Mammary epithelial cell (primary cell): ENCODE measurements at regions of chr11 and their contacts with region 1.

Region 1: GRCh38 chr11:4826425-4826824 is 5.3 kb downstream of the OR51F2 start:
- DNase-seq: no peak
- H3K4me3 ChIP-seq: no peak overlapping the region
- H3K27ac ChIP-seq: no peak overlapping the region
- H3K4me1 ChIP-seq: no peaks in the 10 kb centered on the region
- H3K27me3 ChIP-seq: no peaks in the 10 kb centered on the region
- CTCF ChIP-seq: peak in 1 of 2 donors; percentile 60

Region 2: DNA sequence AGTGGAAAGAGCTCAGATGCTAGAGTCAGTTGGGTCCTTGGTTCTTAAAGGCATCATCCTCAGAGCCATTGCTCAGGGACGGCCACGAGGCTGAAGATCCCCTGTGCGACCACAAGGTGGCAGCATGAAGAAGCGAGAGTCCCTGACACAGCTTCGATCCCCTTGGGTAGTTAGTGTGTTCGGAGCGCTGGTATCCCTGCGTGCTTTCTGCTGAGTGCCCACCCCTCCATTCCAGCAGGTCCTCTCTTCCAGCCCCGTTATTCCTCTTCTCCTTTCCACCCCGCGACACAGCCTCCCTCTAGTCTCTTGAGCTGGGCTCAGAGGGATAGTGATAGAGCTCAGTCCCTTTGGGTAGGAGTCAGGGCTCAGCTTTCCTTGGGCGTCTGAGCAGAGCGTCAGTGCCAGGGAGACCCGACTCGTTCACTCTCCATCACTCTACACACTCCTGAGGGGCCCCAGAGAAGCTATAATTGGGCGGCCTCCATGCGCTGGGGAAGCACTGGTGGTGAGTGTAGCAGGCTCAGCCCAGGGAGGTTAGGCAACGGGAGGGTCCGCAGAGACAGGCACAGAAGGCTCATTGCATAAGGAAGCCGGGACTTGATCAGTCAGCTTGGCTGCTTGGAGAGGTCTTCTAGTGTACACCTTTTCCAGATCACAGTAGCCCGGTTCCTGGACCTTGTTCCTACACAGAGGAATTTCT is 189.3 kb before region 1 on chr11 and contains the start of gene OR51D1:
- CTCF ChIA-PET with region 1: interaction called, 9 read pairs
- dilution Hi-C with region 1: no loop called
- in situ Hi-C with region 1: loop called (anchors 5 kb)
- intact Hi-C with region 1: loop called (anchors 1 kb)
- DNase-seq: peak; percentile 51
- H3K4me3 ChIP-seq: peak within 1 kb of the TSS in 1 of 3 experiments; percentile 2
- H3K27ac ChIP-seq: no peak within 1 kb of the TSS
- H3K4me1 ChIP-seq: no peaks in the 10 kb centered on the region
- H3K27me3 ChIP-seq: no peaks in the 10 kb centered on the region
- CTCF ChIP-seq: peak; percentile 90 to 93
- total RNA-seq, gene OR51D1: not detected

Region 3: DNA sequence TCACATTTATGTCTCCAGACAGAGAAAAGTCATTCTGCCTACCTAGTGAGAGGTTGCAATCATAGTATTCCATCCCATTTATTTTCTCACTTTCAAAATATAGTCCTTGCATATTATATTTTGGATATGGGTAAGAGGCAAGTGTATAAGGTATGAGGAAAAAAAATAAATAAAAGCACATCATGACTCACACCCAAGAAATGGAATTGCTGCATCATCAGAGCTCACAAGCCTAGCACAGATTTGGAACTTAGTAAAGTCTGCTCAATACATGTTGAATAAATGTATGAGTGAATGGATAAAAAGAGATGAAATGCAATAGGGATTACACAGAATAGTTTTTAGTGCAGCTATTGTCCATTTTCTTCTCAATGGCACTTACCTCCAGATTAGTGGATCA is 100.2 kb after region 1 on chr11:
- CTCF ChIA-PET with region 1: no interaction called
- dilution Hi-C with region 1: no loop called
- in situ Hi-C with region 1: no loop called
- intact Hi-C with region 1: no loop called
- DNase-seq: no peak
- H3K4me3 ChIP-seq: no peak overlapping the region
- H3K27ac ChIP-seq: no peak overlapping the region
- H3K4me1 ChIP-seq: no peaks in the 10 kb centered on the region
- H3K27me3 ChIP-seq: no peaks in the 10 kb centered on the region
- CTCF ChIP-seq: no peak